Dorsolateral prefrontal cortex (tissue), 120 donors: ENCODE measurements at regions of chr11 and their contacts with region 1.

Region 1: GRCh38 chr11:125494974-125495725 is 915 bp downstream of the FEZ1 start:
- DNase-seq: peak; percentile 45 to 73 (median 54)
- H3K4me3 ChIP-seq: peak overlapping the region; percentile 51 to 93 (median 80)
- H3K27ac ChIP-seq: peak overlapping the region; percentile 79 to 99 (median 97)
- H3K27me3 ChIP-seq: no peaks in the 10 kb centered on the region
- CTCF ChIP-seq: peak in 2 of 56 donors; percentile 12 to 23

Region 2: DNA sequence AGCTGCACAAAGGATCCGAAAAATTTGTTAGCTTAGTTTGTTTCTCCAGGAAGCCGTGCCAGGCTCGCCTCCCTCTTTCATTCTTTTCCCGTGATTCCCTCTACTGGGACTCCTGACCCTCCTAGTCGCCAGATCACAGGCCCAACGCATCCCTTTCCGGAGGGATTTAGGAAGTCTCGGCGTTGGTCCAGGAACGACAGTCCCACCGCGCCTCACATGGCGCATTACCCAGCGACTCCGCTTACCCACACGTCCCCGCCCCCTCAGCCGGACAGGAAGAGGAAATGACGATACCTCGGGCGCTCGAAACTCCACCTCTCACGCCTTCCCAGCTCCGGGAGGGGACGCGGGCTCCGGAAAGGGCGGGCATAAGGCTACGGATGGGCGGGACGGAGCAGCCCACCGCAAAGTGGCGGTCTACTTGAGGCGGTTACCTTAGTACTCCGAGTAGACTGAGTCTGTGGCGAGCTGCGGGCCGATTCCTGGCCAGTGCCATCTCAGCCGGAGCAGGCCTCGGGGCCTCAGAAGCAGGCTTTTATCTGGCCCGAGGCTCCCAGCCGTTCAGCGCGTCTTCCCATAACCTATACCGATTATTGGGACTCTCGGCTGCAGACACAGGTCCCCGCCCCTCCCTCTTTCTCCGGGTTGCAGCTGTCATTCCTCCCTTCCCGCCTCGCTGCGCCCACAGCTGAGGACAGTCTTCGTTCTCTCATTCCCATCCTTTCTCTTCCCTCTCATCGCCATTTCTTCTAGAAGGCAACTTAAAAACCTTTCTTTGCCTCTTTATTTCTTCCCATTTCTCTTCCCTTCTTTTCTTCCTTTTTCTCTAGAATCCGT is 541.2 kb before region 1 on chr11 and contains the start of gene CCDC15:
- intact Hi-C with region 1: loop called in 1 of 2 experiments (anchors 10 kb)
- DNase-seq: peak; percentile 95 to 99 (median 98)
- H3K4me3 ChIP-seq: peak within 1 kb of the TSS; percentile 59 to 99 (median 79)
- H3K27ac ChIP-seq: peak within 1 kb of the TSS; percentile 32 to 94 (median 85)
- H3K27me3 ChIP-seq: no peaks in the 10 kb centered on the region
- CTCF ChIP-seq: peak in 36 of 56 donors; percentile 7 to 60 (median 38)
- total RNA-seq, gene CCDC15: 0.52 to 3.4 (median 1.4) TPM

Region 3: DNA sequence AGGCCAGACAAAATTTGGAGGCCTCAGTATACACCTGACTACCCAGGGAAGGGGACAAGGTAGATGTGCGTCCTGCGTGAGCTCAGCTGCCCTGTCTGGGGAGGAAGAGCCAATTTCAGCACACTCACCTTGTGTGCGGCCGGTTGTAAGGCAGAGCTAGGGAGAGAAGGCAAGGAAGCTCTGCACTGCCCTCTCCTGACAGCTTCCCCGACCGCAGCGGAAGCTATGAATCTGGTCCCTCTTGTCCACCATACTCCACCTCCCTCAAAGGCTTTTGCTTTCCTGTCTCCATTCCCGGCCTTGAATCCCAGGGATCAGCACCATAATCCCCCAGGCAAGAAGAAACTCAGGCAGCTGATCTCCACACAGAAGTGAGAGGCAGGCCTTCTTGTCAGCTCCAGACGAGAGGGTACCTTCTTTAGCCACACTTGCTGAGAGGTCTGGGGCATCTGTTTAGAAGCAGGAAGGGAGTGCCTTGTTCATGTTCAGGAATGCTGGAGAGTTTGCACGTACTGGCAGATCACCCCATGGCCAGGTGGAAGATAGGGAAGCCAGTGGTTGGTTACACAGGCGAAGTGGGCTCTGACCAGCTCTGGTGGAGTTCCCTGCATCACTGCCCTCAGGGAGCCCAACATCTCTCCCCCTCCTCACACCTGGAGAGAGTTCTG is 61.6 kb before region 1 on chr11:
- intact Hi-C with region 1: loop called in 1 of 2 experiments (anchors 5 kb)
- DNase-seq: peak; percentile 58 to 86 (median 79)
- H3K4me3 ChIP-seq: peak overlapping the region in 8 of 59 donors; percentile 11 to 46 (median 20)
- H3K27ac ChIP-seq: peak overlapping the region in 57 of 59 donors; percentile 15 to 90 (median 73)
- H3K27me3 ChIP-seq: no peaks in the 10 kb centered on the region
- CTCF ChIP-seq: peak; percentile 12 to 78 (median 64)

Region 4: DNA sequence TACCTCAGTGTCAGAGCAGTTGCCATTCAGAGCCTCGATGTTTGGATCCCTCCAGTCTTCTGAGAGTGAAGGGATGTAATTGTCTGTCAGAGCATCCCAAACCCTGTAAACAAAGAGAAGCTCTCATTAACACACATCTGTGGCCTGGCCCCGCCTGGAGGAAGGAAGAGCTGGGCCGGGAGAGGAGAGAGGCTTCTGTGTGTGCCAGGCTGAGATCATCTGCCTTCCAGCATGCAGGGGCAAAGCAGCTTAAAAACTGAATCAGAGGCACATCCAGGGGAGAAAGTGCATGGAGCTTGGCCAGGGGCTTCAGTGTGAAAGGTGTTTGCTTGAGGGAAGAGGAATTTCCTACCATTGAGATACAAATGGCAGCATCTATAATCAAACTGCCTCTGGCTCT is 13.6 kb before region 1 on chr11:
- intact Hi-C with region 1: loop called (anchors 1 to 2 kb)
- DNase-seq: peak; percentile 43 to 92 (median 86)
- H3K4me3 ChIP-seq: peak overlapping the region in 50 of 59 donors; percentile 4 to 62 (median 44)
- H3K27ac ChIP-seq: peak overlapping the region; percentile 76 to 100 (median 96)
- H3K27me3 ChIP-seq: no peaks in the 10 kb centered on the region
- CTCF ChIP-seq: peak in 12 of 56 donors; percentile 1 to 24 (median 18)

Region 5: GRCh38 chr11:125532668-125533067 is 37.5 kb after region 1 on chr11:
- intact Hi-C with region 1: no loop called
- DNase-seq: no peak
- H3K4me3 ChIP-seq: no peak overlapping the region
- H3K27ac ChIP-seq: no peak overlapping the region
- H3K27me3 ChIP-seq: no peaks in the 10 kb centered on the region
- CTCF ChIP-seq: no peak

Region 6: GRCh38 chr11:125542709-125543108 is 47.6 kb after region 1 on chr11:
- intact Hi-C with region 1: no loop called
- DNase-seq: no peak
- H3K4me3 ChIP-seq: no peak overlapping the region
- H3K27ac ChIP-seq: no peak overlapping the region
- H3K27me3 ChIP-seq: no peaks in the 10 kb centered on the region
- CTCF ChIP-seq: no peak

Region 7: DNA sequence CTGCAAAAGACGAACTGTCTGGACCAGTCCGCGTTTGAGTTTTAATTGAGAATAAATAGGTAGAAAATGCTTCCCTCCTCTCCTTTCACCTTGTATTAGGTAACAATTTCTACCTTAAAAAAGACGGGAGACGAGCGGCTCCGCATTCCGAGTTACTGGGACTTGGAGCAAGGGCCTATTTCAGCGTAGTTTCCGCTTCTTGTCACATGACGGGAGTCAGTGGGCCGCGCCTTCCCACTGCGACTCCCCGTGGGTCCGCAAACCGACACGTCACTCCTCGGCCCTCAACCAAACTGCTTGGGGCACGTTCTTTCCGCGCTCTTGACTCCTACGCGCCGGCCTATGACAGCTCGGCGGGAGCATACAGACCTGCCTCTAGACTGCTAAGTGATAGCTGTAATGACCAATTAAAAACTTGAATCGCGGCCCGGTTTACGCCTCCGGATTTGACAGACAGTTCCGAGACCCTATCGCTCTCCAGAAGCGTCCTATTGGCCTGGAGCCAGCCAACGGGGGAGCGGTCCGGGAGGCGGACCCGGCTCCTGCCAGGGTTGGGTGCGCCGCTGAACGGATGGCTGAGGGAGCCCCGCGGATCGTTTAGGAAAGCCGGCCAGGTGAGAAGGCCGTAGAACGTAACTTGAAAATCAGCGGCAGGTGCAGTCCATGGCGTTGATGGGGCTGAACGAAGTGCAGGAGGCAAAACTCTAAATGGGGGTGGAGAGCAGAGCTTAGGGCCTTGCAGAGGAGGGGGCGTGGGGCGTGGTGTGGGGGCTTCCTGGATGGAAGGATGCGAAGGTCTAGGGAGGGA is 97.4 kb after region 1 on chr11 and contains the start of gene STT3A:
- intact Hi-C with region 1: loop called in 1 of 2 experiments (anchors 10 kb)
- DNase-seq: peak; percentile 97 to 100 (median 100)
- H3K4me3 ChIP-seq: peak within 1 kb of the TSS; percentile 60 to 96 (median 80)
- H3K27ac ChIP-seq: peak within 1 kb of the TSS; percentile 43 to 99 (median 93)
- H3K27me3 ChIP-seq: no peaks in the 10 kb centered on the region
- CTCF ChIP-seq: peak in 24 of 56 donors; percentile 7 to 51 (median 24)
- total RNA-seq, gene STT3A: 34.3 to 77.7 (median 52.4) TPM

Region 8: GRCh38 chr11:125797641-125798040 is 302.5 kb after region 1 on chr11:
- intact Hi-C with region 1: no loop called
- DNase-seq: no peak
- H3K4me3 ChIP-seq: no peak overlapping the region
- H3K27ac ChIP-seq: no peak overlapping the region
- H3K27me3 ChIP-seq: no peaks in the 10 kb centered on the region
- CTCF ChIP-seq: no peak